Endothelial cell of umbilical vein (primary cell): ENCODE measurements at regions of chr13 and their contacts with region 1.

Region 1: GRCh38 chr13:110239280-110240125 is 67.5 kb downstream of the COL4A1 start:
- DNase-seq: peak; percentile 82
- H3K4me3 ChIP-seq: peak overlapping the region in 1 of 3 experiments; percentile 8
- H3K27ac ChIP-seq: peak overlapping the region; percentile 54
- H3K4me1 ChIP-seq: peaks cover 25% of the 10 kb centered on the region
- H3K27me3 ChIP-seq: no peaks in the 10 kb centered on the region
- CTCF ChIP-seq: peak in 1 of 2 donors; percentile 11
- POLR2A ChIP-seq: no peak

Region 2: GRCh38 chr13:110225609-110226562 is 13.6 kb before region 1 on chr13:
- CTCF ChIA-PET with region 1: interaction called, 10 read pairs
- POLR2A ChIA-PET with region 1: no interaction called
- dilution Hi-C with region 1: no loop called
- intact Hi-C with region 1: no loop called
- DNase-seq: peak; percentile 65
- H3K4me3 ChIP-seq: no peak overlapping the region
- H3K27ac ChIP-seq: peak overlapping the region; percentile 56
- H3K4me1 ChIP-seq: peaks cover 21% of the 10 kb centered on the region
- H3K27me3 ChIP-seq: no peaks in the 10 kb centered on the region
- CTCF ChIP-seq: no peak
- POLR2A ChIP-seq: no peak